ENCODE measurements at regions of chr22 and their contacts with region 1.

Region 1: DNA sequence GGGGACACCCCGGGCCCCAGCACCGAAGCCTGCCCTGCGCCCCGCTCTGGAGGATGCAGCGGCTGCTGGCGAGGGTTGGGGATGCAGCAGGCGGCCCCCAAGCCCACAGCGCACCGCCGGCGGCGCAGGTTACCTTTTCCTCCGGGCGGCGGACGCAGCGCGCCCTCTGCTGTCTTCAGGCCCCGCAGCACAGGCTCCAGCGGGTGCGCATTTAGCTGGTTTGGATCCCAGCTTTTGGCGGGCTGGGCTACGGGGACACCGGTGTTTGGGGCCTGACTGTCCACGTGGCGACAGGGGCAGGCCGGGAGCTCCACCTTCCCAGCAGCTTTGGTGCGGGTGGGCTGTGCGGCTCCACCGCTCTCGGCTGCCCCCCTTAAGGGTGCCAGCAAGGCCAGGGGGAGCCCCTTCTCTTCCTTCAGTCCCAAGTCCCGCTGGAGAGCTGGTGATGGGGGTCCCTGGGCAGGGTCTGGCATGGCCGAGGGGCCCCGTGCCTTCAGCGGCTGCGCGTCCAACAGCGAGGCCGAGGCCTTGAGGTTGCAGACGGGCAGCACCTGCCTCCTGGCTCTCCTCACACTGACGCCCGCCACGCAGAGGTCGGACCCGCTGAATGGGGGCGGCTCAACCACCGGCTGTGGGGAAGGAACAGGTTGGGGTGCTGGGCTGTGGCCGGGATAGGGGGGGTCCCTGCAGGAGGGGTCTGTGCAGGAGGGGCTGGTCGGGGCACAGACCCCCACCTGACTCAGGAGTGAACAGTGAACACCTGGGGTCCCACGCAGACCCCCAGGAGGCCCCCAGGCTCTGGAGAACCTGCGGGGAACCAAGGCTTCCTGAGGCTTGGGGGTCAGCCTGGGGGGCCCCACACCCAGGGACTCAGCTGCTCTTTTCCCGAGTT is 18.0 kb upstream of the IL17REL start:
- DNase-seq: peak; percentile 90
- H3K4me3 Mint-ChIP-seq: peak overlapping the region; percentile 57
- H3K27ac Mint-ChIP-seq: no peak overlapping the region
- H3K4me1 Mint-ChIP-seq: peaks cover 20% of the 10 kb centered on the region
- H3K27me3 Mint-ChIP-seq: peaks cover 40% of the 10 kb centered on the region
- CTCF ChIP-seq: peak; percentile 93

Region 2: GRCh38 chr22:49767355-49768062 is 263.0 kb before region 1 on chr22:
- CTCF ChIA-PET with region 1: interaction called, 5 read pairs
- intact Hi-C with region 1: loop called (anchors 2 kb)
- DNase-seq: peak; percentile 28
- H3K4me3 Mint-ChIP-seq: no peak overlapping the region
- H3K27ac Mint-ChIP-seq: no peak overlapping the region
- H3K4me1 Mint-ChIP-seq: no peaks in the 10 kb centered on the region
- H3K27me3 Mint-ChIP-seq: no peaks in the 10 kb centered on the region
- CTCF ChIP-seq: peak; percentile 84

Region 3: GRCh38 chr22:49951000-49951677 is 79.4 kb before region 1 on chr22:
- CTCF ChIA-PET with region 1: interaction called, 13 read pairs
- intact Hi-C with region 1: no loop called
- DNase-seq: peak; percentile 98
- H3K4me3 Mint-ChIP-seq: peak overlapping the region; percentile 58
- H3K27ac Mint-ChIP-seq: peak overlapping the region; percentile 93
- H3K4me1 Mint-ChIP-seq: peaks cover 9% of the 10 kb centered on the region
- H3K27me3 Mint-ChIP-seq: no peaks in the 10 kb centered on the region
- CTCF ChIP-seq: no peak

Region 4: DNA sequence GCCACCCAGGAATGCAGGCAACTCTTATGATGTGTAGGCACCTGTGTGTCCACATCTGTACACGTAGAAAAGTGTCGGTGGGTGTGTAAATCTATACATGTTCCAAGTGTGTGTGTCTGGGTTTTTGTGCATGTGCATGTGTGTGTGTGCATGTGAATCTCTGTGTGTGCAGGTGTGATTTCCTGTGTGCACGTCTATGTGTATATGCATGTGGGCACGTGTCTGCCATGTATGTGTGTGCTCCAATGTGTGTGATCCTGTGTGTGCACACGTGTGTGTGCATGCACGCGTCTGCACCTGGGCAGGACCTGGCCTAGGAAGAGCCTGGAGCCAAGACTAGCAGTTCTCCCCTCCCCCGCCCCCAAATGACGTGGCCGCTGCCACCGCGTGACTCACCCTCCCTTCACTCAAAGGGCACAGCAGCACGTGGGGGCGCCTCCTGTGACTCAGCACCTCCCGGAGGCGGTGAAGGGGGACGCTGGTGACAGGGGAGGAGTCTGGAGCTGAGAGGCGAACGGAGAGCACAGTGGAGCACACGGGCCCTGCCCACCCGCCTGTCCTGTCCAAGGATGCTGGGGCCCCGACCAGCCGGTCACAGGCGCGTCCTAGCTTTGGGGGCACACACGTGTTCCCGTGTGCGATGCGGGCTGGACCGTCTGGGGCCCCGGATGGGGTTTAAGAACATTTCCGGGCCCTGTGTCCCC is 59.9 kb before region 1 on chr22:
- CTCF ChIA-PET with region 1: interaction called, 11 read pairs
- intact Hi-C with region 1: loop called (anchors 10 kb)
- DNase-seq: peak; percentile 98
- H3K4me3 Mint-ChIP-seq: peak overlapping the region; percentile 72
- H3K27ac Mint-ChIP-seq: peak overlapping the region; percentile 87
- H3K4me1 Mint-ChIP-seq: peaks cover 17% of the 10 kb centered on the region
- H3K27me3 Mint-ChIP-seq: no peaks in the 10 kb centered on the region
- CTCF ChIP-seq: no peak

Region 5: DNA sequence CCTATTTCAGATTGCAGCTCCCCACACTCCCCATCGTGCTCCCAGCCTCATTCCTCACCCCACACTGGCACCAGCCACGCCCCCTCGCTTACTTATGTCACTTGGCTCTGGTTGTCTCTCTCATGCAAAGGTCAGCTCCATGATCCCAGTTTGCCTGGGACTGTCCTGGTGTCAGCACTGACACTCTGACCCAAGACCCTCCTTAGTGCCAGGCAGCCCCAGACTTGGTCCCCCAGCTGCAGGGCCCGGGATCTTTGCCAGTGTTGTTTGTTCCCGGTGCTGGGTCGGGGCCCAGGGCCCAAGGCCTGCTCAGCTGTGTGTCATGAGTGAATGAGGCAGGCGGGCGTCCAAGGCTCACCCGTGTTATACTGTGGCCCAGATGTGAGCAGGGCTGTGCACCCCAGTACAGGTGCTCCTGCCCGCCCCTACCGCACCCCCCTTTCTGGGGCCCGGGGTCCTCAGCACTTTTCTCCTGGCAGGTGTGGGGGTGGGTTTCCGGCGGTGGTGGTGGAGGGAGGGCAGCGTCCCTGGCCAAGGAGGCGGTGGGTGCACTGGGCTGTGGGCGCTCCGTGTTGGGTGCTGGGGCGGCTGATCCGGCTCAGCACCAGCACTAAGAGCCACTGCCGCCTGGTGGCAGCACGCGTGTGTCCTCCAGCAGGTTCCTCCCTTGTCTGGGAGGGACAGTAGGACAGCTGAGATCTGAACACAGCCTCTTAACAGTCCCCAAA is 37.5 kb before region 1 on chr22:
- CTCF ChIA-PET with region 1: interaction called, 12 read pairs
- intact Hi-C with region 1: loop called (anchors 5 kb)
- DNase-seq: peak; percentile 78
- H3K4me3 Mint-ChIP-seq: no peak overlapping the region
- H3K27ac Mint-ChIP-seq: no peak overlapping the region
- H3K4me1 Mint-ChIP-seq: peaks cover 6% of the 10 kb centered on the region
- H3K27me3 Mint-ChIP-seq: no peaks in the 10 kb centered on the region
- CTCF ChIP-seq: peak; percentile 71

Region 6: DNA sequence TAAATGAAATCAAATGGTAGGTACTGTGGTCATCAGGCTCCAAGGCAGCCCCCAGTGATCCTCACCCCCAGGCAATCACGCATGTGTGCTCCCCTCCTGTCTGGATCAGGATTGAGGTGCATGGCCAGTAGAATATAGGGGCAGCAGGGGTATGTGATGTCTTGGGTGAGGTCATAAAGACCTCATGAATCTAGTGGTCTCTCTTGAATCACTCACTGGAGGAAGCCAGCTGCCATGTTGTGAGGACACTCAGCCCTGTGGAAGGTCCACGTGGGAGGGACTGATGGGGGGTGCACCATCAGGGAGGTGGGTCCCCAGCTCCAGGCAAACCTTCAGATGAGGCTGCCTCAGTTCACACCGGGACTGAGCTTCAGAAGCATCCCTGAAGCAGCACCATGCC is 11.2 kb before region 1 on chr22:
- CTCF ChIA-PET with region 1: no interaction called
- intact Hi-C with region 1: no loop called
- DNase-seq: no peak
- H3K4me3 Mint-ChIP-seq: no peak overlapping the region
- H3K27ac Mint-ChIP-seq: no peak overlapping the region
- H3K4me1 Mint-ChIP-seq: peaks cover 7% of the 10 kb centered on the region
- H3K27me3 Mint-ChIP-seq: peaks cover 4% of the 10 kb centered on the region
- CTCF ChIP-seq: no peak

Measured in Calu3 (cell line).